ENCODE measurements at regions of chr9 and their contacts with region 1.

Region 1: DNA sequence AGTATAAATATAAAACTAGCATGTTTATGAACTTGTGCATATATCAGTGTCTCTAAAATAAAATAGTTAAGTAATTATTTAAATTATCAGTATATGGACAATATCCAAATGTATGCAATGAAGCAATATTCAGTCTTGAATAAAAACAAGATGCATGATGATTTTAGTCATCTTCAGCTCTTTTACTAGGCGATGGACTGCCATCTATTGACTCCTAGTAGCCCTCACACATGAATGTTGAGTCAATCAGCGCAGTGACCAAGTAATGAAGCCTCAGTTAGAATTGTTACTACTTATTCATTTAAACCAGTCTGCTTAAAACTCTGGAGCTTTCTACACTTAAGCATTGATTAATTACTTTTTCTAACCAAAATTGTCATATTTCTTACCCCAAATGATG is 92.9 kb upstream of the GRHPR start:
- DNase-seq: no peak
- H3K4me3 Mint-ChIP-seq: no peak overlapping the region
- H3K27ac Mint-ChIP-seq: no peak overlapping the region
- H3K4me1 Mint-ChIP-seq: peaks cover 5% of the 10 kb centered on the region
- H3K27me3 Mint-ChIP-seq: no peaks in the 10 kb centered on the region

Region 2: DNA sequence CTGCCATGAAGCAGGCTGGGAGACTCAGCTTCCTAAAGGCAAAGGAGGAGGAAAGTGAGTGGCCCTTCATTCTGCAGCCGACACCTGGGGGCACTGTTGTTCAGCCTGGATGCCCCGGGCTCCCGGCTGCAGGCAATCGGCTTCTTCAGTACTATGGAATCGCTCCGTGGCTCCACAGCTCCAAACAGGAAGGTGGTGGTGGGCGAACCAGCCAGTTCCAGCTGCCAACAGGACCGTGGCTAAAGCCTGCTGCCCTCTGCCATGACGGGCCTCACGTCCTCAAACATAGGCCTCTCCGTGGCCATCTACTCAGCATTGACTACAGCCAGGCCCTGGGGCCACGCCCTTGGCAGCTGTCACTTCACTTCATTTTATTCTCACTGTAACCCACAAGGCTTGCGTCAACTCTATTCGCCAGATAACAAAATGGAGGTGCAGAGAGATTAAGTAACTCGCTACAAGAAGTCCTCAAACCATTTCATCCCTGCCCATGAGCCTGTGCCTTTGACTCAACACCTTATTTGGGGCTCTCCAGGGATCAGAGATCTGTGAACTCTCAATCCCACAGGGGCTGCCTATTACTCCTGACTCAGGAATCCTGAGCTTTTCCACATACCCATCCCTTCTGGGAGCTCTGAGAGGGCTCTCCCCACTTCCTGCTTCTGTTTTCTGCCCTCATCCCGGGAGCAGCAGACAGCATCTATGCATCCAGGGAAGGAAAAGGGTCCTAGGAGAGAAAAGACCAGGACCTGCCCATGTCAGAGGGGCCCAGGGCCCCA is 333.5 kb before region 1 on chr9:
- CTCF ChIA-PET with region 1: interaction called, 12 read pairs
- POLR2A ChIA-PET with region 1: no interaction called
- DNase-seq: peak; percentile 61
- H3K4me3 Mint-ChIP-seq: no peak overlapping the region
- H3K27ac Mint-ChIP-seq: no peak overlapping the region
- H3K4me1 Mint-ChIP-seq: no peaks in the 10 kb centered on the region
- H3K27me3 Mint-ChIP-seq: peaks cover 32% of the 10 kb centered on the region

Region 3: DNA sequence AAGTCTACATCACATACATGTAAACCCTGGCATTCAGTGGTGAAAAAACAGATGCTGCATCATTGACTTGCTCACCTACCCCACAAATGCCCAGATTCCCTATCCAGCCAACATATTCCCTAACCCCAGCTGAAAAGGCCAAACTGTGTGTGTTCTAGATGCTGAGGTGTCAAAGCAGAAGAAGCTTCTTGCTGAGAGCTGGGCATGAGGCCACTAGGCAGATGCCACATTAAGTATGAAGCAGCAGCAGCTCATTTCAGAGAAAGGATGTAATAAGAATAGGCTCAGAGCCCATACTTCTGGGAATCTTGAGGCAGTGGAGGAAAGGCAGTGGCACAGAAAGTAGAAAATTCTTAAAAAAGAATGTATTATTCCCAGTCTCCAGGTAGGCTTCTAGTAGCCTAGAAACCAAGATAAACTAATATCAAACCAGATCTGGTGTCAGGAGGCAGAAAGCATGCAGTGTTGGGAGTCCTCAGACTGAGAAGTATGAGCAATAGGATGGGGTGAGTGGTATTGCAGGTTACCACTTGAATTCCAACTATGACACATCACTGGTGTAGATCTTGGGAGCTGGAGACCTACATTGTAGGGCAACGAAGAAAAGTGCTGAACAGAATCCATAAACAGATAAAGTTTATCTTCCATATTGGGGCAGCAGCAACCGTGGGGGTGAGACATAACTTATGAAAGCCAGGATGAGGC is 21.1 kb after region 1 on chr9:
- CTCF ChIA-PET with region 1: no interaction called
- POLR2A ChIA-PET with region 1: no interaction called
- DNase-seq: no peak
- H3K4me3 Mint-ChIP-seq: no peak overlapping the region
- H3K27ac Mint-ChIP-seq: no peak overlapping the region
- H3K4me1 Mint-ChIP-seq: peaks cover 2% of the 10 kb centered on the region
- H3K27me3 Mint-ChIP-seq: no peaks in the 10 kb centered on the region

Region 4: GRCh38 chr9:37528652-37529510 is 199.3 kb after region 1 on chr9:
- CTCF ChIA-PET with region 1: no interaction called
- POLR2A ChIA-PET with region 1: no interaction called
- DNase-seq: peak; percentile 85
- H3K4me3 Mint-ChIP-seq: peak overlapping the region; percentile 67
- H3K27ac Mint-ChIP-seq: peak overlapping the region; percentile 84
- H3K4me1 Mint-ChIP-seq: peaks cover 31% of the 10 kb centered on the region
- H3K27me3 Mint-ChIP-seq: no peaks in the 10 kb centered on the region

Measured in activated CD4-positive, alpha-beta memory T cell treated with anti-CD3 and anti-CD28 coated beads, Interleukin-2, amount 10 ng/mL, durations not matched to agents 7 days and 5 days (primary cell).